OCI-LY7 (cell line): ENCODE measurements at regions of chr10 and their contacts with region 1.

Region 1: GRCh38 chr10:87861953-87862678 is 1.2 kb downstream of the KLLN start:
- DNase-seq: peak; percentile 99
- H3K4me3 ChIP-seq: peak overlapping the region; percentile 96
- H3K27ac ChIP-seq: peak overlapping the region; percentile 94
- H3K4me1 ChIP-seq: peaks cover 19% of the 10 kb centered on the region
- CTCF ChIP-seq: no peak; the same call in 1 of the 2 replicates

Region 2: GRCh38 chr10:87552248-87552929 is 309.7 kb before region 1 on chr10:
- CTCF ChIA-PET with region 1: no interaction called
- POLR2A ChIA-PET with region 1: no interaction called
- intact Hi-C with region 1: no loop called
- DNase-seq: no peak
- H3K4me3 ChIP-seq: no peak overlapping the region
- H3K27ac ChIP-seq: no peak overlapping the region
- H3K4me1 ChIP-seq: no peaks in the 10 kb centered on the region
- CTCF ChIP-seq: no peak

Region 3: DNA sequence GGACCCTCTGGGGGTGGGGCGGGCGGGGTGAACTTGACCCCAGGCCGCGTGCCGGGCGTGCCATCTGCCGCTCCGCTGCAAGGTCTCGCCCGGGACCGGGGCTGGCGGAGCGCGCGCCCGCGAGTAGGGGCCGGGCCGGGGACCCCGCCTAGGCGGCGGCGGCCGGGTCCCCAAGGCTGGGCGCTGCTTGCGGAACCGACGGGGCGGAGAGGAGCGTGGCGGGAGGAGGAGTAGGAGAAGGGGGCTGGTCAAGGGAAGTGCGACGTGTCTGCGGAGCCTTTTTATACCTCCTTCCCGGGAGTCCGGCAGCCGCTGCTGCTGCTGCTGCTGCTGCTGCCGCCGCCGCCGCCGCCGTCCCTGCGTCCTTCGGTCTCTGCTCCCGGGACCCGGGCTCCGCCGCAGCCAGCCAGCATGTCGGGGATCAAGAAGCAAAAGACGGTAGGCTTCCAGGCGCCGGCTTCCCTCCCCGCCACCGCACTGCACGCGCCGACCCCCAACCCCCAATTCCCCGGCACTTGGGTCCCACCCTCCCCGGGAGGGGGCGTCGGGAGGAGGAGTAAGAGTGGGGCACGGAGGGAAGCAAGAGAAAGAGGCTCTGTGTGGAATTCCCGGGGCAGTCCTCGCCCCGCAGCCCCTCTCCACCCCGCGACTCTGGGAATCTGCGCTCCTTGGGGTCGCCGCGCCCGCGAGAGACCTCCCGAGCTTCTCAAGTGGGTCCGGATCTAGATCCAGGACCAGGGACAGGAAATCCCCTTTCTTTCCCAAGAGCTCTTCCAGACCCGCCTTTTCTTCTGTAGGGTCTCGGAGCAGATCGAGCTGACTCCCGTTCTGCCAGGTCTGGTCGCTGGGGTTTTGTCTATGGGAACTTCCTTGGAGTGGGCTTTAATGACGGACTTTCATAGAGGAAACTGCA is 202.3 kb before region 1 on chr10 and contains the start of gene PAPSS2:
- CTCF ChIA-PET with region 1: no interaction called
- POLR2A ChIA-PET with region 1: no interaction called
- intact Hi-C with region 1: loop called (anchors 1 kb)
- DNase-seq: no peak
- H3K4me3 ChIP-seq: peak within 1 kb of the TSS; percentile 34
- H3K27ac ChIP-seq: no peak within 1 kb of the TSS
- H3K4me1 ChIP-seq: no peaks in the 10 kb centered on the region
- CTCF ChIP-seq: no peak
- total RNA-seq, gene PAPSS2: 0.03 TPM in 1 of 2 replicates, not detected in the other

Region 4: DNA sequence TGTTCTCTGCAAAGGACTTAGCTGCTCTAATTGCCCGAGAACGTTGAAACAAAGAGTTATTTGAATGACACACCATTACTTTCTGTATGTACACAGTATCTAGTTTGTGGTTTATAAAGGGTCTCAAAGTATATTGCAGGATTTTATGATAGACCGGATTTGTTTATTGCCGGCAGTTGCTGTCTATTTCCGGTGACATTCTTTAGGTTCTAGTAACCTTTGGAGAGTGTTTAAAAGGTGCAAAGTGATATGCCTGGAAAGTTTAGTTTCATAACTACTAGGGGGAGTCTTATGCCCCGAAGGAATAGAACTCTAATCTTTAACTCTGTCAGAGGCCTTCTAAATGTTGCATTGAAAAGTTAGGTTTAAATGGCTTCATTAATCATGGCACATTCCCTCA is 138.6 kb before region 1 on chr10:
- CTCF ChIA-PET with region 1: no interaction called
- POLR2A ChIA-PET with region 1: no interaction called
- intact Hi-C with region 1: no loop called
- DNase-seq: no peak
- H3K4me3 ChIP-seq: no peak overlapping the region
- H3K27ac ChIP-seq: no peak overlapping the region
- H3K4me1 ChIP-seq: peaks cover 22% of the 10 kb centered on the region
- CTCF ChIP-seq: no peak

Region 5: GRCh38 chr10:88064608-88065382 is 202.7 kb after region 1 on chr10:
- CTCF ChIA-PET with region 1: no interaction called
- POLR2A ChIA-PET with region 1: interaction called, 8 read pairs
- intact Hi-C with region 1: loop called (anchors 5 kb)
- DNase-seq: no peak
- H3K4me3 ChIP-seq: no peak overlapping the region
- H3K27ac ChIP-seq: no peak overlapping the region
- H3K4me1 ChIP-seq: peaks cover 89% of the 10 kb centered on the region
- CTCF ChIP-seq: no peak

Region 6: GRCh38 chr10:88114368-88114767 is 252.3 kb after region 1 on chr10:
- CTCF ChIA-PET with region 1: interaction called, 12 read pairs
- POLR2A ChIA-PET with region 1: interaction called, 50 read pairs
- intact Hi-C with region 1: loop called (anchors 1 kb)
- DNase-seq: peak; percentile 90
- H3K4me3 ChIP-seq: peak overlapping the region; percentile 33
- H3K27ac ChIP-seq: peak overlapping the region; percentile 83
- H3K4me1 ChIP-seq: peaks cover 98% of the 10 kb centered on the region
- CTCF ChIP-seq: peak; percentile 89

Region 7: GRCh38 chr10:88293073-88293472 is 431.0 kb after region 1 on chr10:
- CTCF ChIA-PET with region 1: no interaction called
- POLR2A ChIA-PET with region 1: no interaction called
- intact Hi-C with region 1: loop called (anchors 5 kb)
- DNase-seq: no peak
- H3K4me3 ChIP-seq: no peak overlapping the region
- H3K27ac ChIP-seq: no peak overlapping the region
- H3K4me1 ChIP-seq: peaks cover 49% of the 10 kb centered on the region
- CTCF ChIP-seq: no peak

Region 8: DNA sequence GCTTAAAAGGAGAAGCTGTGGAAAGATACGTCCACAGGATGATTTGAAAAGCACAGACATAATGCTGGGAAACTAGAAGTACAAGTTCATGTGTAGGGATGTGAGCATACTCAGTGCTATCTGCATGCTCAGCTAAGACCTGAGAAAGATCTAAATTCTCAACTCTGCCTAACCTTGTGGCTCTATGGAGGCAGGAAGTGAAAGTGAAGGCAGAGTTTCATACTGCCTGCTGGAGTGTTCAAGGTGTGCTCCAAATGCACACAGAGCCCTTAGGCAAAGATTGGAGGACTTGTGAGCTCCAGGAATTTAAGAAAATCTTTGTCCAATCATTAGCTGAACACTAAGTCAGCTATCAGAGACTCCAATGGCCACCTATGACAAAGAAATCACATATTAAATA is 530.1 kb after region 1 on chr10:
- CTCF ChIA-PET with region 1: interaction called, 36 read pairs
- POLR2A ChIA-PET with region 1: interaction called, 134 read pairs
- intact Hi-C with region 1: loop called (anchors 1 kb)
- DNase-seq: peak; percentile 80
- H3K4me3 ChIP-seq: peak overlapping the region; percentile 28
- H3K27ac ChIP-seq: peak overlapping the region; percentile 68
- H3K4me1 ChIP-seq: peaks cover 55% of the 10 kb centered on the region
- CTCF ChIP-seq: no peak

Region 9: GRCh38 chr10:88616251-88616977 is 754.3 kb after region 1 on chr10:
- CTCF ChIA-PET with region 1: no interaction called
- POLR2A ChIA-PET with region 1: no interaction called
- intact Hi-C with region 1: no loop called
- DNase-seq: no peak
- H3K4me3 ChIP-seq: no peak overlapping the region
- H3K27ac ChIP-seq: no peak overlapping the region
- H3K4me1 ChIP-seq: no peaks in the 10 kb centered on the region
- CTCF ChIP-seq: no peak

Region 10: DNA sequence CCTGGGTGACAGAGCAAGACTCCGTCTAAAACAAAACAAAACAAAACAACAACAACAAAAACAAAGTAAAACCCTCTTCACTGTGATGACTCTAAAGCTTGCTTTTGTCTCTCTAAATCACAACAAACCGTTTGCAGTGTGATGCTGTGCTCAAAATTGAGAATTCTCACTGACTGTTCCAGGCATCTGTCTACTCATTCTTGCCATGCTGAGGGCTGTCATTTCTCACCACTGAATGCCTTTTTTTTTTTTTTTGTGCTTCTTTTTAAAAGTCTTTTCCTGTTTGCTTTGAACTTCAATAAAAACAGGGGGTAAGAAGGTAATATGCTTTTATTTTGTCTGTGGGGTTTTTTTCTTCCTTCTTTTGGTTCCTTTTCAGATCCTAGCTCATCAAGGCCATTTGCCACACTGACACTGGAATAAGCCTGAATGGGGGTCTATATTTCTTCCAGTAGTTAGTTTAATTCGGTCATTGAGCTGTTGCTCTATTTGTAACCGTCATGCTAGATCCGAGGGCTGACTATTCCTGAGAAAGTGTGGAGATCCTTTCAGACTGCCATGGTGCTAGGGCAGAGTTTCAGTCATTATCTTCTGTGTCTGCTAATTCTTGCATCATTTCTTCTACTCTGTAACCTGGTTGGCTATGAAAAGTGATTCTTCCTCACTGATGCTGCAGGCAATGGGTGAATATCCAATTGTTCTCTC is 1139.1 kb after region 1 on chr10:
- CTCF ChIA-PET with region 1: no interaction called
- POLR2A ChIA-PET with region 1: no interaction called
- intact Hi-C with region 1: loop called (anchors 2 kb)
- DNase-seq: peak; percentile 23
- H3K4me3 ChIP-seq: peak overlapping the region; percentile 63
- H3K27ac ChIP-seq: peak overlapping the region; percentile 48
- H3K4me1 ChIP-seq: peaks cover 70% of the 10 kb centered on the region
- CTCF ChIP-seq: no peak